ENCODE measurements at regions of chr14 and their contacts with region 1.

Region 1: DNA sequence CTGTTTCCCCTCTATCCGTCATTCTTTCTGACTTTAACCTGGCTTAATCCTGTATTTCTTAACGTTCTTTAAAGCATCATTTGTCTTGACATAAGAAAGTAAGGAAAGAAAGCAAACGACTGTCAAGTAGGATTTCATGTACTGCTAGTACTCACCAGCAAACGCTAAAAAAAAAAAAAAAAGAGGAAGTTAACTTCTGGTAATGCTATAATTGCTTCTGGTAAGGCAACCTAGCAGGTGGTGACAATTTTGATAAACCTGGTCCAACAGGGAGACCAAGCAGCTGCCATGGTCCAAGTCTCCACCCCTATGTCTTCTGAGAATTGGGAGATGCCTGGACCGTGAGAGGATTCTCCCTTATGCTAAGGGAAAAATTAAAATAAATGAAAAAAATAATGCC is 306.6 kb downstream of the DAD1 start:
- DNase-seq: no peak
- ATAC-seq: peak; percentile 93
- H3K4me3 ChIP-seq: no peak overlapping the region
- H3K27ac ChIP-seq: no peak overlapping the region
- H3K4me1 ChIP-seq: peaks cover 5% of the 10 kb centered on the region; the same call in 1 of the 2 replicates
- H3K27me3 ChIP-seq: peaks cover 0 to 3% of the 10 kb centered on the region in 2 experiments; a peak in 2 of 4 replicates
- CTCF ChIP-seq: no peak
- EP300 ChIP-seq: peak in 1 of 2 experiments; percentile 48; a peak in 1 of 4 replicates
- POLR2A ChIP-seq: no peak
- RAD21 ChIP-seq: no peak

Region 2: GRCh38 chr14:22163051-22163450 is 119.4 kb before region 1 on chr14:
- CTCF ChIA-PET with region 1: interaction called, 9 read pairs
- POLR2A ChIA-PET with region 1: interaction called, 3 read pairs
- RAD21 ChIA-PET with region 1: interaction called, 4 read pairs
- SMC1A ChIA-PET with region 1: interaction called, 4 read pairs
- in situ Hi-C with region 1: no loop called
- intact Hi-C with region 1: loop called (anchors 10 kb)
- DNase-seq: no peak
- ATAC-seq: peak; percentile 64
- H3K4me3 ChIP-seq: no peak overlapping the region
- H3K27ac ChIP-seq: no peak overlapping the region
- H3K4me1 ChIP-seq: no peaks in the 10 kb centered on the region
- H3K27me3 ChIP-seq: peaks cover 2% of the 10 kb centered on the region in 2 experiments; a peak in 2 of 4 replicates
- CTCF ChIP-seq: peak in 2 of 3 experiments; percentile 3 to 28; a peak in 3 of 6 replicates
- EP300 ChIP-seq: no peak
- POLR2A ChIP-seq: no peak
- RAD21 ChIP-seq: peak; percentile 40

Region 3: DNA sequence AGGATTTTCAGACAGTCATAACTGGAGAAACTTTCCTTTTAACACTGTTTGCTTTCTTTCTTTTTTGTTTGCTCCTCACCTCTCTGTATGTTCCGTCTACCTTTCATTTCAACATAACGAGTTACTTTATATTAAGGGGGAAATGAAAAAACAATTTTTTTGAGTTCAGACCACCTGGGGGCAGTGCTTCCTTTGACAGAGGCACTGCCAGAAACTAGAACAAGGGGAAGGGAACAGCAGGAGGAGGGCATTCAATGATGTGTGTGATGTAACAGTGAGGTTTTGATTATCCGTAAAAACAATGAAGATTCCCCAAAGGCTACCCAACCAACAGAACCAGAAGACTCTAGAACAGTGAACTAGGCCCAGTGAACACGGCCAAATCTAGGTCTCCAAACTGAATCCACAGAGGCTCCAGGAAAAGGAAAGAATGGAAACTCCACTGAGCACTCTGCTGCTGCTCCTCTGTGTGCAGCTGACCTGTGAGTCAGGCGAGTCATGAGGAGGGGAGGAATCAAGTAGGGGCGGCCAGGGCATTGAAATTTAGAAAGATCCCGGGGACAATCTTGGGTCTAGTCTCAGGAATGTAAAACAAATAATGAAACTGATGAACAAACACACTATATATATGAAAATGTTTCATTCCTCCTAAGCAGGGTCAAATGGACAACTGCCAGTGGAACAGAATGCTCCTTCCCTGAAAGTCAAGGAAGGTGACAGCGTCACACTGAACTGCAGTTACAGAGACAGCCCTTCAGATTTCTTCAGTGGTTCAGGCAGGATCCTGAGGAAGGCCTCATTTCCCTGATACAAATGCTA is 16.9 kb before region 1 on chr14:
- CTCF ChIA-PET with region 1: interaction called, 44 read pairs
- POLR2A ChIA-PET with region 1: interaction called, 3 read pairs
- RAD21 ChIA-PET with region 1: interaction called, 3 read pairs
- SMC1A ChIA-PET with region 1: interaction called, 7 read pairs
- in situ Hi-C with region 1: no loop called
- intact Hi-C with region 1: no loop called
- DNase-seq: no peak
- ATAC-seq: peak; percentile 57
- H3K4me3 ChIP-seq: no peak overlapping the region
- H3K27ac ChIP-seq: no peak overlapping the region
- H3K4me1 ChIP-seq: no peaks in the 10 kb centered on the region; the same call in 1 of the 2 replicates
- H3K27me3 ChIP-seq: no peaks in the 10 kb centered on the region
- CTCF ChIP-seq: peak in 1 of 3 experiments; percentile 19; a peak in 2 of 6 replicates
- EP300 ChIP-seq: no peak
- POLR2A ChIP-seq: no peak
- RAD21 ChIP-seq: peak; percentile 32

Region 4: DNA sequence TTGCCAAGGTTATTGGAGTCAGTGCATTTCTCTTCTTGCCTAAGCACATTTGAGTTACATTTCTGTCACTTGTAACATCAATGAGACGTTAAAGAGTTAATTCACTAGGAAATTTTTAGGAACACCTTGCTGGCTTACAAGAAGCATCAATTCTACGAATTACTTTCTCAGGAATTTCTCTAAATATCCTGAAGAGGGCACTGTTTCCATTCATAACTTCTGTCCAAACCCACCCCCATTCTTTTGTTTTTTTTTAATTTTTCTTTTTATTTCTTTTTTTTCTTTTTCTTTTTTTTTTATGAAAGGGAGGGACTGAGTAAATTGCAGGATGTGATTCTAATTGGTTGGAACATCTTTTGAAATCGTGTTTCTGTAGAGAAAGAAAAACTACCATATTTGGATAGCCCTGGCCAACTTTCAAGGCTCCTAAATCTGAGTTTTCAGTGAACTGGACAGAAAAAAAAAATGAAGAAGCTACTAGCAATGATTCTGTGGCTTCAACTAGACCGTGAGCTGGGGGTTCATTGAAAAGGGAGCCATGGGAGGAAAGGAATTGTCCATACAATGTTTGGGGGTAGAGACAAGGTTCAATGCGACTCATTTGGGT is 21.3 kb after region 1 on chr14:
- CTCF ChIA-PET with region 1: interaction called, 39 read pairs
- POLR2A ChIA-PET with region 1: no interaction called
- RAD21 ChIA-PET with region 1: interaction called, 6 read pairs
- SMC1A ChIA-PET with region 1: interaction called, 8 read pairs
- in situ Hi-C with region 1: no loop called
- intact Hi-C with region 1: no loop called
- DNase-seq: no peak
- ATAC-seq: no peak
- H3K4me3 ChIP-seq: no peak overlapping the region
- H3K27ac ChIP-seq: no peak overlapping the region
- H3K4me1 ChIP-seq: no peaks in the 10 kb centered on the region
- H3K27me3 ChIP-seq: 0 out of 4 replicates have a peak, but pooled peaks cover 0 to 5% of the 10 kb centered on the region in 2 experiments
- CTCF ChIP-seq: peak; percentile 39 to 48 (median 44); a peak in 4 of 6 replicates
- EP300 ChIP-seq: no peak
- POLR2A ChIP-seq: no peak
- RAD21 ChIP-seq: peak; percentile 61

Region 5: GRCh38 chr14:22314181-22314820 is 31.9 kb after region 1 on chr14:
- CTCF ChIA-PET with region 1: interaction called, 52 read pairs
- POLR2A ChIA-PET with region 1: no interaction called
- RAD21 ChIA-PET with region 1: interaction called, 9 read pairs
- SMC1A ChIA-PET with region 1: interaction called, 17 read pairs
- in situ Hi-C with region 1: no loop called
- intact Hi-C with region 1: no loop called
- DNase-seq: peak; percentile 48
- ATAC-seq: peak; percentile 98
- H3K4me3 ChIP-seq: no peak overlapping the region
- H3K27ac ChIP-seq: no peak overlapping the region
- H3K4me1 ChIP-seq: no peaks in the 10 kb centered on the region
- H3K27me3 ChIP-seq: no peaks in the 10 kb centered on the region
- CTCF ChIP-seq: peak; percentile 55 to 80 (median 69); a peak in 5 of 6 replicates
- EP300 ChIP-seq: no peak
- POLR2A ChIP-seq: no peak
- RAD21 ChIP-seq: peak; percentile 75